CD8-positive, alpha-beta memory T cell (primary cell): ENCODE measurements at regions of chr2 and their contacts with region 1.

Region 1: DNA sequence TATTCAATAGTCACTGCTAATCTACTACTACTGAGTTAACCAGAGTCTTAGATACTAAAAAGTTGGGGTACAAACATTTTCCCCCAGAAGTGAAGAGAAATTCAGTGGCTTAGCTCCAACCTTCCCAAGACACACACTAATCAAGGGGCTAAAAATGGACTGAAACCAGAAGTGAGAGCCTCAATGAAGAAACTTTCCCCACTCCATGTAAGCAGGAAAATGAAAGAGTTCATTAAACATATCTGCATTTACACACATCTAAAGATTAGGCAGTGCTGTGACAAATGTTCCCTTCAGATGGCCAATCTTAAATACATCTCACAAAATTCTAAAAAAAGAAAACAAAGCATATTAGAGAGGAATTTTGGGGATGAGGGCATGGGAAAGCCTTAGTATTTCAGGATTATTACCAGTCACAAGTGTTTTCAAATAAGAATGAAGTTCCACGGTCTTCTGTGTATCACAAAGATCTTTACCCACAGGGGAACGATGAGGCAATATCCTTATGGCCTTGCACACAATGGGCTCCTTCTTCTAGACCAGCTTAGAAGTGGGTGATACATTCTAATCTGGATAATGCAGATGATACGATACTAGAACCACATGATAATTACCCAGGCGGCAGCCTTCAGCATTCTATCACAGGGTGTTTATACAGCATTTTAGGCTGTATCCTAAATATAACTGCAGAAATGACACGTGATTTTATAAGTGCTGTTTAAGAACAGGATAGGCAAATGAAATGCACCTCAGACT is 17.1 kb downstream of the ANKRD44 start:
- DNase-seq: peak in 3 of 5 donors; percentile 10 to 56 (median 50)
- H3K4me3 ChIP-seq: peak overlapping the region; percentile 13
- H3K4me3 Mint-ChIP-seq: peak overlapping the region; percentile 60 to 92 (median 85)
- H3K27ac ChIP-seq: peak overlapping the region; percentile 15
- H3K27ac Mint-ChIP-seq: peak overlapping the region; percentile 92 to 99 (median 97)
- H3K4me1 ChIP-seq: peaks cover 94% of the 10 kb centered on the region
- H3K4me1 Mint-ChIP-seq: peaks cover 93 to 97% (median 94%) of the 10 kb centered on the region in 3 donors
- H3K27me3 ChIP-seq: no peaks in the 10 kb centered on the region
- H3K27me3 Mint-ChIP-seq: no peaks in the 10 kb centered on the region

Region 2: GRCh38 chr2:197304556-197305011 is 11.2 kb after region 1 on chr2:
- CTCF ChIA-PET with region 1: interaction called, 17 read pairs
- POLR2A ChIA-PET with region 1: interaction called, 20 read pairs
- DNase-seq: no peak
- H3K4me3 ChIP-seq: peak overlapping the region; percentile 35
- H3K4me3 Mint-ChIP-seq: peak overlapping the region; percentile 84 to 98 (median 89)
- H3K27ac ChIP-seq: peak overlapping the region; percentile 14
- H3K27ac Mint-ChIP-seq: peak overlapping the region; percentile 94 to 99 (median 96)
- H3K4me1 ChIP-seq: peaks cover 82% of the 10 kb centered on the region
- H3K4me1 Mint-ChIP-seq: peaks cover 78 to 98% (median 91%) of the 10 kb centered on the region in 3 donors
- H3K27me3 ChIP-seq: no peaks in the 10 kb centered on the region
- H3K27me3 Mint-ChIP-seq: no peaks in the 10 kb centered on the region

Region 3: DNA sequence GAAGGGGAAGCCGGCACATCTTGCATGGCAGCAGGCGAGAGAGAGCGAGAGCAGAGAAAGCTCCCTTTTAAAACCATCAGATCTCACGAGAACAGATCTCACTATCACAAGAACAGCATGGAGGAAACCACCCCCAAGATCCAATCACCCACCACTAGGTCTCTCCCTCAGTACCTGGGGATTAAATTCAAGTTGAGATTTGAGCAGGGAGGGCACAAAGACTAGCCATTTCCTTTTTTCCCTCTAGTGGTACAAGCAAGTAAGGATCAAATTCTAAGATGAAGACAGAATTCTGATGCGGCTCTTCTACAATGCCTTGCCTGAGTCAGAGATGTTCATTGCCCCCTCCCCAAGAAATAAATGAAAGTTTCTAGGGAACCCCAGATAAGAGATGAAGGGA is 62.7 kb after region 1 on chr2:
- CTCF ChIA-PET with region 1: no interaction called
- POLR2A ChIA-PET with region 1: no interaction called
- DNase-seq: peak in 1 of 5 donors; percentile 13
- H3K4me3 ChIP-seq: no peak overlapping the region
- H3K4me3 Mint-ChIP-seq: peak overlapping the region in 3 of 7 donors; percentile 6 to 33 (median 17)
- H3K27ac ChIP-seq: no peak overlapping the region
- H3K27ac Mint-ChIP-seq: peak overlapping the region in 3 of 8 donors; percentile 13 to 91 (median 27)
- H3K4me1 ChIP-seq: peaks cover 9% of the 10 kb centered on the region
- H3K4me1 Mint-ChIP-seq: peaks cover 4 to 20% (median 15%) of the 10 kb centered on the region in 3 donors
- H3K27me3 ChIP-seq: no peaks in the 10 kb centered on the region
- H3K27me3 Mint-ChIP-seq: no peaks in the 10 kb centered on the region